ENCODE measurements at regions of chr3 and their contacts with region 1.

Region 1: DNA sequence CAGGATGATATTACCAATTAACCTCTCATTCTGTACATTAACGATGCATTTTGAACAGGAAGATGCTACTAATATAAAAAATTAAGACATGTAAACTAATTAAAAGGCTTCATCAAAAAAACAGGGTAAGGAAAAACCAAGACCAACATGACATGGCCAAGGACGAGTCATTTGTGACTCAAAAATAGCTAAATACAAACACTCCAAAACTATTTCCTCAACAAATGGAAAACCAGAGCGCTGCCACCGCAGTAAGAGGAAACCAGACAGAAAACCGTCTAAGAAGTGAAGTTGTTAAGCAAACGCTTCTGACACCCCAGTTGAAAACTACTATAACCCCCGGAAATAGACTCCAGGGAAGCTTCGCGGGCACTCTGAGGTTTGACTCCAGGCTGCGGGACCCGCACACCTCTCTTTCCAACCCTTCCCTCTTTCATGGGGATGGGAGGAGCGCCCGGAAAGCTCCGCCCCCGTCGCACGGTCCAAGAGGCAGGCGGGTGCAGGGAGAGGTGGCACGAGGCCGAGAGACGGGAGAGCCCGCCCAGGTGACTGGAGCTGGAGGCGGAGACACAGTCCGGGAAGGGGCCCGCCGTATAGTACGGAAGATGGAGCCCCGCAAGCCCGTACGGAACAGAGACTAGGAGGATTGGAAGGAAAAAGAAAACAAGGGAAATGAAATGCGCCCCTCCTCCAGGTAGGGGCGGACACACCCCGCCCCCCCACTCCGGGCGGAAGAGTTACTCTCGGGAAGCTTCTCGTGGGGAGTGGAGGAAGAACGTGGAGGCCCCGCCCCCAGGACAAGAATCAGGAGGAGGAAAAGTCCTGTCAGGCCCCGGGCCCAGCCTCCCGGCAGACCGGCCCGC is 708 bp downstream of the DCAF1 start:
- DNase-seq: peak; percentile 91
- ATAC-seq: peak; percentile 67
- H3K4me3 Mint-ChIP-seq: peak overlapping the region; percentile 98
- H3K27ac Mint-ChIP-seq: peak overlapping the region; percentile 95
- H3K4me1 Mint-ChIP-seq: peaks cover 15% of the 10 kb centered on the region
- H3K27me3 Mint-ChIP-seq: no peaks in the 10 kb centered on the region
- CTCF ChIP-seq: no peak

Region 2: GRCh38 chr3:51511000-51511399 is 11.9 kb after region 1 on chr3:
- CTCF ChIA-PET with region 1: interaction called, 12 read pairs
- POLR2A ChIA-PET with region 1: interaction called, 4 read pairs
- intact Hi-C with region 1: no loop called
- DNase-seq: no peak
- ATAC-seq: no peak
- H3K4me3 Mint-ChIP-seq: no peak overlapping the region
- H3K27ac Mint-ChIP-seq: no peak overlapping the region
- H3K4me1 Mint-ChIP-seq: peaks cover 4% of the 10 kb centered on the region
- H3K27me3 Mint-ChIP-seq: no peaks in the 10 kb centered on the region
- CTCF ChIP-seq: no peak

Region 3: DNA sequence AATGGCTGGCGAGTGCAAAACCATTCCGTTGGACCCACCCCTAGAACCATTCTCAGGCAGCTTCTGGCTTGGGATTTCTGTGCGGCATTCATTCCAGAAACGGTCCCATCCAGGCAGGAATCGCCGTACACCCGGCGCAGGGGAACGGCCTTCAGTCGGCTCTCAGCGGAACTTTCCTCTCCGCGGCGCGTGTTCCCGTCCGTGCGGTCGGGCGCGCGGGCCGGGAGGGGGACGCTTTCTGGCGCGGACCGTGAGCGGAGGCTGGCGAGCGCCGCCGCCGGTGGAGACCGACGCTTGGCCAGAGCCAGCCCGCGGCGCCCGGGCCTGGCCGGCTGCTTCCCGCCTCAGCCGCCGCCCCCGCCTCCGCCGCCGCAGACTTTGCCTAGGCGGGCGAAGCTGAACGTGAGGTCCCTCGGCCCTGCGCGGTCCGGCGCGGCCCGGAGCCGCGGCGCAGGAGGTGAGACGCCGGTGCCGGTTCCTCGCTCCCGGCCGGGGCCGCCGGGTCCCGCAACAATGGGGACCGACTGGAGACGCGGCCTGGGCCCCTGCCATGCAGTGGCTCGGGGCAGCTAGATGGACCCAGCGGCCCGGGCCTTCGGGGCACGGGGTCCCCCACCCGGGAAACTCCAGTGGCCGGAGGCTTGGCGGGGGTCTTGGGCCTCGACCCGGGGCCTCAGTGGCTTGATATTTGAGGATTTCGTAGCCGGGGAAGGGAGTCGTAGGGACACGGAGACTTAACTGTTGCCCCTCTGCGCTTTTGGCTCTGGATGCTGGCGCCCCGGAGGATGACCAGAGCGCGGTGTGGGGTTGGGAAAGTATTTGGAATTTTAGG is 39.6 kb after region 1 on chr3 and contains the start of gene RAD54L2:
- CTCF ChIA-PET with region 1: interaction called, 29 read pairs
- POLR2A ChIA-PET with region 1: interaction called, 32 read pairs
- intact Hi-C with region 1: no loop called
- DNase-seq: peak; percentile 75
- ATAC-seq: peak; percentile 87
- H3K4me3 Mint-ChIP-seq: peak within 1 kb of the TSS; percentile 83
- H3K27ac Mint-ChIP-seq: peak within 1 kb of the TSS; percentile 89
- H3K4me1 Mint-ChIP-seq: peaks cover 22% of the 10 kb centered on the region
- H3K27me3 Mint-ChIP-seq: no peaks in the 10 kb centered on the region
- CTCF ChIP-seq: peak; percentile 30
- total RNA-seq, gene RAD54L2: 24.1 to 24.6 TPM

Region 4: DNA sequence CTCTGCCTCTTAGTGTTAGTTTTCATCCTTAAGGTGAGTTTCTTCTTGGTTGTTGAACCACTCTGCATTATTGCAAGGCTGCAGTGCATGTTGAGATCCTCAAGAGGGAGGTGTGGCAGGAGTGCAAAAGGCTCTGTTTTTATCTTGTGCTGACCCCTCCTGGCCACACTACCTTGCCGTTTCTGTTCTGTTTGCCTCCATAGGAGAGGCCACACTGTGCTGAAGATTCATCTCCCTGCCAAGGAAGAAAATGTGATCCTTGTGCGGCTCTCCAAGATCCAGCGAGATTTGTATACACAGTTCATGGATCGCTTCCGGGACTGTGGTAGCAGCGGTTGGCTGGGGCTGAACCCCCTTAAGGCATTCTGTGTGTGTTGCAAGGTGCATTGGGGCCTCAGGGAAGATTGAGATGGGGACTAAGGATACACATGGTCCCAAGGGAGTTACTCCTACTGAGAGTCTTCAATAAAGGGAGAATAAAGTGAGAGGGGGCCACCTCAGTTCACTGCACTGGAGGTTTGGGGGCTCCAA is 138.9 kb after region 1 on chr3:
- CTCF ChIA-PET with region 1: interaction called, 15 read pairs
- POLR2A ChIA-PET with region 1: no interaction called
- intact Hi-C with region 1: no loop called
- DNase-seq: peak; percentile 66
- ATAC-seq: peak; percentile 89
- H3K4me3 Mint-ChIP-seq: no peak overlapping the region
- H3K27ac Mint-ChIP-seq: no peak overlapping the region
- H3K4me1 Mint-ChIP-seq: no peaks in the 10 kb centered on the region
- H3K27me3 Mint-ChIP-seq: no peaks in the 10 kb centered on the region
- CTCF ChIP-seq: peak; percentile 76

Region 5: GRCh38 chr3:51682079-51682478 is 183.0 kb after region 1 on chr3:
- CTCF ChIA-PET with region 1: interaction called, 161 read pairs
- POLR2A ChIA-PET with region 1: interaction called, 5 read pairs
- intact Hi-C with region 1: loop called (anchors 5 kb)
- DNase-seq: peak; percentile 87
- ATAC-seq: peak; percentile 90
- H3K4me3 Mint-ChIP-seq: no peak overlapping the region
- H3K27ac Mint-ChIP-seq: peak overlapping the region; percentile 68
- H3K4me1 Mint-ChIP-seq: peaks cover 89% of the 10 kb centered on the region
- H3K27me3 Mint-ChIP-seq: no peaks in the 10 kb centered on the region
- CTCF ChIP-seq: peak; percentile 92

Region 6: DNA sequence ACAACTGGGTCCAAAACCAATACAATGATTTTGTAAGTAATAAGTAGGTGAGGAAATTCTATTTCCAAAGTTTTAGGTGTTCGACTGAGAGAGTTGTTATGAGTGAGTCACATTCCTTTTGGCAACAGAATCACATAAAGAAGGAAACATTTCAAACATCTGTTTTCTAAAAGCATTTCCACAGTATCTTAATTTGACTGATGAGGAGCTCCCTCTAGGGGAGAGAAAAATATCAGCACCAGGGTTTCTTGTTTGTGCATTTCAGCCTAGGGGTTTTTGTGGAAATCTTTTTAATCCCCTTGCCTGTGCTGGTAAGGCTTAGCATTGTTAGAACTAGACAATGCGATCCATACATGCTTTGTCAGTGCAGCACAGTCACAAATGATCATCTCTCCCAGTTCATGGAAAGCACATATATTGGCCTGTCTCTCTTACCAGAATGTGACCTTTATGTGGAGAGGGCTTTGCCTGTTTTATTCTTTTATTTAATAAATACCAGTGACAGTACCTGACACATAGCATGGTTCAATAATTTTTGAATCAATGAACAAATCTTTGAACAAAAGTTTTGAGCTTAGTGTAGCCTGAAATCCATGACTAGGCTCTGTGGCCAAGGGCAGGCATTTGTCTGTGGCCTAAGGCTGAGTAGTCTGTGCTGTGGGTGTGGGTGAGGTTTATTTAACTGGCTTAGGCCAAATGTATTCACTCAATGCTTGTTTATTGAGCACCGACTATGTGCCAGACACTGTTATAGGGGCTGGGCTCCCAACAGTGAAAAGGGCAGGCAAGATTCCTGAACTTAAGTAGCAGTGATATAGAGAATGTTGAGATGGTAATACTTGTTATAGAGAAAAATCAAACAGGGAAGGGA is 301.0 kb after region 1 on chr3:
- CTCF ChIA-PET with region 1: interaction called, 18 read pairs
- POLR2A ChIA-PET with region 1: no interaction called
- intact Hi-C with region 1: no loop called
- DNase-seq: peak; percentile 43
- ATAC-seq: peak; percentile 50
- H3K4me3 Mint-ChIP-seq: no peak overlapping the region
- H3K27ac Mint-ChIP-seq: no peak overlapping the region
- H3K4me1 Mint-ChIP-seq: peaks cover 35% of the 10 kb centered on the region
- H3K27me3 Mint-ChIP-seq: peaks cover 16% of the 10 kb centered on the region
- CTCF ChIP-seq: peak; percentile 84